PC-9 (cell line): ENCODE measurements at regions of chr19 and their contacts with region 1.

Region 1: DNA sequence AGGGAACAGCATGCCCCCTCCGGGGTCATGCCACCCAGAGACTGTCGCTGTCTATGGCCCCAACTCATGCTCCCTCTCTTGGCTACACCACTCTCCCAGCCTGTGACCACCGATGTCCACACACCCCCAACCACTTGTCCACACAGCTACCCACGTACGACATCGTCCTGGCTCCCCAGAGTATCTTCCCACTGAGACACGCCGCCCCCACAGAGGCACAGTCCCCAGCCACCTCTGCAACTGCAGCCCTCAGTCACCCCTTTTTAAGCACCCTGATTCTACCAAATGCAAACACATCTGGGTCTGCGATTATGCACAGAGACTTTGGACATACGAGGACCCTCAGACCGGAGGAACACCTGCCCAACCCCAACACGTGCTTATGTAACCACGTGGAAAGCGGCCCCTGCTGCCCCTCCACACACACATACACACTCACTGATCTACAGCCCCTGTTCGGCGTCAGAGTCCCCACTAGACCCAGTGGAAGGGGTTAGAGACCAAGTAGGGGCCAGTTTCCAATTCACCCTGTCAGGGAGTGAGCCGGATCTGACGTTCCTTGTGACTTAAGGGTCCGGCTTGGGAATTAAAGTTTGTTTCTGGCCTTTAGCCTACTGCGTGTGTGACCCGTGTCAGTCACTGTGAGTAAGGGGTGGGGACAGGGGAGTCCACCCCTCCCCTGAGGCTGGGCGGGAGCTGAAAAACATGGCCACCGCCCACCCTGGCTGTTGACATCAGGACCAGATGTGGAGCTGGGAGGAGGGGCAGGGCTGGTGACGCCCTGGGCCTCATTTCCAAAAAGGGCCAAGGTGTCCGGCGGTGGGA is 11.9 kb upstream of the AXL start:
- DNase-seq: no peak
- H3K4me3 ChIP-seq: no peak overlapping the region
- H3K27ac ChIP-seq: no peak overlapping the region
- H3K4me1 ChIP-seq: no peaks in the 10 kb centered on the region
- H3K27me3 ChIP-seq: no peaks in the 10 kb centered on the region
- CTCF ChIP-seq: no peak

Region 2: GRCh38 chr19:40982594-40983101 is 224.5 kb before region 1 on chr19:
- CTCF ChIA-PET with region 1: no interaction called
- POLR2A ChIA-PET with region 1: no interaction called
- intact Hi-C with region 1: no loop called
- DNase-seq: no peak
- H3K4me3 ChIP-seq: no peak overlapping the region
- H3K27ac ChIP-seq: no peak overlapping the region
- H3K4me1 ChIP-seq: no peaks in the 10 kb centered on the region
- H3K27me3 ChIP-seq: no peaks in the 10 kb centered on the region
- CTCF ChIP-seq: no peak

Region 3: DNA sequence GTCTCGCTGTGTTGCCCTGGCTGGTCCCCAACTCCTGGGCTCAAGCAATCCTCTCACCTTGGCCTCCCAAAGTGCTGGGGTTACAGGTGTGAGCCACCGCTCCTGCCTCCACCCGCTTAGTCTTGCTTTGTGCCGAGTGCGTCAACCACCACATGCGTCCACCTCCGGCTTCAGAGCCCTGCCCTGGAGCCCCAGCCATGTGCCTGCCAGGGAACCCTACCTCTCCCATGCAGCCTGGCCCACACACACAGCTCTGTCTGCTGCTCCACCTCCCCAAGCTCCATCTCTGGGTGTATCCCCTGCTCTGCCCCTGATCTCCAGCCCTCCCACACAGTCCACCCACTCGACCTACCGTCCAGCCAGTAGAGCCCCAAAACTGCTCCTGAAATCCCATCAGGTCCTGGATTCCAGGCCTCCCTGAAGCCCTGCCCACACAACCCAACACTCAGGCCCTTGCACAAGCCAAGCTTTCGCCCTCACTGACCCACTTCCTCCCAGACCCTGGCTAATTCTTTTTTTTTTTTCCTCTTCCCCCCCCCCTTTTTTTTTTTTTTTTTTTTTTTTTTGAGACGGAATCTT is 83.3 kb before region 1 on chr19:
- CTCF ChIA-PET with region 1: no interaction called
- POLR2A ChIA-PET with region 1: no interaction called
- intact Hi-C with region 1: loop called (anchors 2 kb)
- DNase-seq: no peak
- H3K4me3 ChIP-seq: no peak overlapping the region
- H3K27ac ChIP-seq: no peak overlapping the region
- H3K4me1 ChIP-seq: no peaks in the 10 kb centered on the region; the same call in 1 of the 2 replicates
- H3K27me3 ChIP-seq: no peaks in the 10 kb centered on the region
- CTCF ChIP-seq: no peak

Region 4: GRCh38 chr19:41218615-41219507 is 11.7 kb after region 1 on chr19 and contains the start of gene AXL:
- CTCF ChIA-PET with region 1: interaction called, 16 read pairs
- POLR2A ChIA-PET with region 1: interaction called, 13 read pairs
- intact Hi-C with region 1: no loop called
- DNase-seq: peak in 1 of 2 experiments; percentile 87
- H3K4me3 ChIP-seq: peak within 1 kb of the TSS; percentile 68
- H3K27ac ChIP-seq: no peak within 1 kb of the TSS
- H3K4me1 ChIP-seq: peaks cover 25% of the 10 kb centered on the region
- H3K27me3 ChIP-seq: no peaks in the 10 kb centered on the region
- CTCF ChIP-seq: no peak
- total RNA-seq, gene AXL: 236 and 271 TPM in 2 replicates

Region 5: DNA sequence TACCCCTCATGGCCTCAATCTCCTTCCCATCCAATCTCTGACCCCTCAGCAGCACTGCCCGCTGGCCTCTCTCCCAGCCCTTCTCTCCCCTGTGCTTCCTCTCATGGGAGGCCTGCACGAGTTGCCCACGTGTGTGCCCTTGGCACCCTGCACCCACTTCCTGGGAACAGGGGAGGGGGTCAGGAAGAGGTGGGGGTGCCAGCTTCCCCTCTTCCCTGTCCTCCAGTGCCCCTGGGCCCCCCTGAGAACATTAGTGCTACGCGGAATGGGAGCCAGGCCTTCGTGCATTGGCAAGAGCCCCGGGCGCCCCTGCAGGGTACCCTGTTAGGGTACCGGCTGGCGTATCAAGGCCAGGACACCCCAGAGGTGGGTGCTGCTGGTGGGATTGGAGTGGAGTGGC is 31.1 kb after region 1 on chr19:
- CTCF ChIA-PET with region 1: no interaction called
- POLR2A ChIA-PET with region 1: no interaction called
- intact Hi-C with region 1: no loop called
- DNase-seq: no peak
- H3K4me3 ChIP-seq: no peak overlapping the region
- H3K27ac ChIP-seq: no peak overlapping the region
- H3K4me1 ChIP-seq: no peaks in the 10 kb centered on the region
- H3K27me3 ChIP-seq: no peaks in the 10 kb centered on the region
- CTCF ChIP-seq: no peak

Region 6: DNA sequence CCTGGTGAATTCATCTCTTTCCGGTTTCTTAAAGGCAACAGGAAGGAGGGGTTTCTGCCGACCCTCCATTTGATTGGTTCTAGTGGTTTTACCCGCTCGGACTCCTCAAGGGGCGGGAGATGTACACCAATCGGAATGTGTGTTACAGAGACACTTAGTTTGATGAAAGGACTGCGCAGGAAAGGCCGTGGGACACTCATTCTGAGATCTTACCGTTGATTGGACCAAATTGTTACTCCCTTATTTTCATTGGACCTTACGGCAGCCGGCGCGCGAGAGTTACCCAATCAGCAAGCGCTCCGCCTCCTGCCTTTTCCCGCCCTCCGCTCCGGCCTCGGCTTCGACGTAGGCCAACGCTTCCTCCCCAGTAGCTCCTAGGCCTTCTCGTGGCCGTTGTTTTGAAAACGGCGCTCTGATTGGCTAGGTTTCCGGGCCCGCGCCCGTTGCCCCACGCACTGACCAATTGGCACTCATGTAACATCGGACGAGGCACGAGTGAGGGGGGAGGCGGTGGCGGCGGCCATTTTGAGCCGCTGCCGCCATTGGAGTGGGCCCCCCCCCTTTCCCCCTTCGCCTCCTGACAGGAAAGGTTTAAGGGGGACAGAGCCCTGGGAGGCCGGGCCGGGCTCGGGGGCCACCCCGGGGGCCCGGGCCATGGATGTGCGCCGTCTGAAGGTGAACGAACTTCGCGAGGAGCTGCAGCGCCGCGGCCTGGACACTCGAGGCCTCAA is 56.9 kb after region 1 on chr19 and contains the start of gene HNRNPUL1:
- CTCF ChIA-PET with region 1: interaction called, 10 read pairs
- POLR2A ChIA-PET with region 1: interaction called, 20 read pairs
- intact Hi-C with region 1: loop called (anchors 1 kb)
- DNase-seq: peak; percentile 99 to 100
- H3K4me3 ChIP-seq: peak within 1 kb of the TSS; percentile 85
- H3K27ac ChIP-seq: peak within 1 kb of the TSS; percentile 90
- H3K4me1 ChIP-seq: peaks cover 10% of the 10 kb centered on the region; the same call in 1 of the 2 replicates
- H3K27me3 ChIP-seq: no peaks in the 10 kb centered on the region
- CTCF ChIP-seq: no peak
- total RNA-seq, gene HNRNPUL1: 248 and 266 TPM in 2 replicates

Region 7: GRCh38 chr19:41327576-41328156 is 120.5 kb after region 1 on chr19:
- CTCF ChIA-PET with region 1: interaction called, 10 read pairs
- POLR2A ChIA-PET with region 1: no interaction called
- intact Hi-C with region 1: no loop called
- DNase-seq: peak; percentile 65 to 92
- H3K4me3 ChIP-seq: peak overlapping the region; percentile 30; the same call in 1 of the 2 replicates
- H3K27ac ChIP-seq: no peak overlapping the region
- H3K4me1 ChIP-seq: peaks cover 16% of the 10 kb centered on the region
- H3K27me3 ChIP-seq: no peaks in the 10 kb centered on the region
- CTCF ChIP-seq: no peak